ENCODE measurements at regions of chr9 and their contacts with region 1.

Region 1: GRCh38 chr9:12775679-12776512 is 1.1 kb downstream of the LURAP1L start:
- DNase-seq: peak; percentile 76
- H3K4me3 ChIP-seq: peak overlapping the region; percentile 90
- H3K27ac ChIP-seq: peak overlapping the region; percentile 89
- H3K27me3 ChIP-seq: no peaks in the 10 kb centered on the region
- CTCF ChIP-seq: peak; percentile 59

Region 2: GRCh38 chr9:12425878-12426864 is 349.7 kb before region 1 on chr9:
- CTCF ChIA-PET with region 1: no interaction called
- POLR2A ChIA-PET with region 1: no interaction called
- DNase-seq: no peak
- H3K4me3 ChIP-seq: no peak overlapping the region
- H3K27ac ChIP-seq: no peak overlapping the region
- H3K27me3 ChIP-seq: no peaks in the 10 kb centered on the region
- CTCF ChIP-seq: no peak

Region 3: DNA sequence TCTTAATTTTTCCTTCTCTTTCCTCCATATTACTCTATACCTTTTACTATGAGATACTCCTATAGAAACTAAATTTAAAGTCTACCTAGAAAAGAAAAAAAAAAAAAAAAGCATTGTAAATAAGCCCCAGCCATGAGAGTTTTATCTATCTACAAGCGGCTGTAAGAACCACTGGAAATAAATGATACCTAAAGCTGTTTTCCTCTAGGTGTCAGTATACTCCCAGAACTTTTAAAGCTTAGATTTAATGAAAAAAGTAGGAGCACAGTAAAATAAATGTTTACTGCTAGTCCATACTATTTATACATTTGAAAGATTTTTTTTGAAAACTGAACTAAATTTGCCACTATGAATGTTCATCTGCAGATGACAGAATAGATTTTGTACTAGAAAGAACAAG is 56.5 kb before region 1 on chr9:
- CTCF ChIA-PET with region 1: interaction called, 20 read pairs
- POLR2A ChIA-PET with region 1: no interaction called
- DNase-seq: no peak
- H3K4me3 ChIP-seq: no peak overlapping the region
- H3K27ac ChIP-seq: no peak overlapping the region
- H3K27me3 ChIP-seq: no peaks in the 10 kb centered on the region
- CTCF ChIP-seq: peak; percentile 62

Region 4: GRCh38 chr9:12790883-12791282 is 15.0 kb after region 1 on chr9:
- CTCF ChIA-PET with region 1: interaction called, 12 read pairs
- POLR2A ChIA-PET with region 1: interaction called, 6 read pairs
- DNase-seq: no peak
- H3K4me3 ChIP-seq: no peak overlapping the region
- H3K27ac ChIP-seq: no peak overlapping the region
- H3K27me3 ChIP-seq: no peaks in the 10 kb centered on the region
- CTCF ChIP-seq: no peak

Region 5: GRCh38 chr9:12798066-12798770 is 22.3 kb after region 1 on chr9:
- CTCF ChIA-PET with region 1: interaction called, 15 read pairs
- POLR2A ChIA-PET with region 1: interaction called, 3 read pairs
- DNase-seq: no peak
- H3K4me3 ChIP-seq: no peak overlapping the region
- H3K27ac ChIP-seq: no peak overlapping the region
- H3K27me3 ChIP-seq: no peaks in the 10 kb centered on the region
- CTCF ChIP-seq: no peak

Region 6: DNA sequence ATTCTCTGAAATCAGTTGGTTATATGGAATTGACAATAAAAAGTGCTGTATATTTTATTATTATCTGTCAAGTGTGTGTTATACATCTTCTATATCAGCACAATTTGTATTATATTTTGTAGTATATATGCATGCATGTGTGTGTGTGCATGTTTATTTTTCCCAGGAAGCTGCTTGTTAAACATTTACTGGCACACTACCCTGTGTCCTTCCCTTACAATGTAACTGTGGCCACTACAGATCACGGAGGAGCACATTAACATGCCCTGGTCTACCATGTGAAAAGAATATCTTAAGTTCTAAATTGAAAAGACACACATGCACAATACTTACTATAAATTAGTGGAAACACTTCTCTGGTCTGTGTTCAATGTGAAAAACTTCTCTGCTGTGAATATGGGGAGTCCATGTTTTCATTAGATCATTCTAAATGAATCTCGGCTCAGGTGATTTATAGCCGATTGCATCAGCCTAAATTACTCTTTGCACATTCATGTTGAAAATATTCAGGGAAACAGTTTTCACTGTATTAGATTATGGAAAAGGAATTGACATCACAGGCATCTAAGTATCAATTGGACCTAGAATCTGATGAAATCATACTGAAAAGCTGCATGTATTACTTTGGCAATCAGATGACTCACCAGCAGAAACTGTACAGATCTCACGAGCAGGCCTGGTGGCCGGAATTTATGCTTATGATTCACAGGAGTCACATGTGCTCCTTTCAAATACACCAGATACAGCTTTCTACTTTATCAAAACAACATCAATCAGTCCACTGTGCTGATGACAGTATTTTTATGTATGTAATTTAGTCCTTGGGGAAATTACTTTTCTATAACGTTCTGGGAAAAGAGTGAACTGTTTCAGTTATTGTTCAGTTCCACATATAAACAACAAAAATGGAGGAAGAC is 38.3 kb after region 1 on chr9:
- CTCF ChIA-PET with region 1: interaction called, 10 read pairs
- POLR2A ChIA-PET with region 1: interaction called, 28 read pairs
- DNase-seq: peak; percentile 98
- H3K4me3 ChIP-seq: peak overlapping the region; percentile 44
- H3K27ac ChIP-seq: peak overlapping the region; percentile 95
- H3K27me3 ChIP-seq: no peaks in the 10 kb centered on the region
- CTCF ChIP-seq: peak; percentile 56

Region 7: GRCh38 chr9:12819436-12820185 is 43.7 kb after region 1 on chr9:
- CTCF ChIA-PET with region 1: interaction called, 10 read pairs
- POLR2A ChIA-PET with region 1: interaction called, 28 read pairs
- DNase-seq: no peak
- H3K4me3 ChIP-seq: no peak overlapping the region
- H3K27ac ChIP-seq: no peak overlapping the region
- H3K27me3 ChIP-seq: no peaks in the 10 kb centered on the region
- CTCF ChIP-seq: peak; percentile 44

Region 8: GRCh38 chr9:12884737-12885414 is 109.0 kb after region 1 on chr9:
- CTCF ChIA-PET with region 1: interaction called, 18 read pairs
- POLR2A ChIA-PET with region 1: interaction called, 11 read pairs
- DNase-seq: peak; percentile 74
- H3K4me3 ChIP-seq: no peak overlapping the region
- H3K27ac ChIP-seq: no peak overlapping the region
- H3K27me3 ChIP-seq: no peaks in the 10 kb centered on the region
- CTCF ChIP-seq: peak; percentile 69

Measured in AG04450 (cell line).